T-cell (primary cell): ENCODE measurements at regions of chr14 and their contacts with region 1.

Region 1: GRCh38 chr14:29054119-29054518 is 287.5 kb downstream of the FOXG1 start:
- DNase-seq: no peak
- ATAC-seq: no peak
- H3K4me3 ChIP-seq: no peak overlapping the region
- H3K4me3 Mint-ChIP-seq: no peak overlapping the region
- H3K27ac ChIP-seq: no peak overlapping the region
- H3K27ac Mint-ChIP-seq: no peak overlapping the region
- H3K4me1 ChIP-seq: no peaks in the 10 kb centered on the region
- H3K4me1 Mint-ChIP-seq: no peaks in the 10 kb centered on the region
- H3K27me3 ChIP-seq: no peaks in the 10 kb centered on the region
- H3K27me3 Mint-ChIP-seq: no peaks in the 10 kb centered on the region

Region 2: DNA sequence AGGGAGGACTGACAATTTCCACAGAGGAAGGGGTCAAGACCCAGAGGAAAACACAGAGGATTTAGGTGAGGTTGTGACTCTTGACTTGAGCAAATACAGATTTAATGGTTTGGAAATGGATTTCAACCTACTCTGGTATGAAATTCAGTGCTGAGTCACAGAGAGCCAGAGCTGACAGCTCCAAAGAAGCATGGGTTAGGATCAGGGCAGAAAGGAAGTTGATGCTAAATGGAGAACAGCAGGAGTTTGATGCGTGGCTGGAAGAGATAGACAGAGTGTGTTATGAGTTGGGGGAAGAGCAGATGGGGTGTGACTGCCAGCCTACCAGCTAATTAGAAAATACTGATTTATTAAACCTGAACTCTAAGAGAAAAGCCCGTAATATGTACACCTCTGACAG is 14.9 kb before region 1 on chr14:
- CTCF ChIA-PET with region 1: no interaction called
- POLR2A ChIA-PET with region 1: interaction called in 1 of 2 experiments, 10 read pairs
- DNase-seq: no peak
- ATAC-seq: no peak
- H3K4me3 ChIP-seq: no peak overlapping the region
- H3K4me3 Mint-ChIP-seq: no peak overlapping the region
- H3K27ac ChIP-seq: no peak overlapping the region
- H3K27ac Mint-ChIP-seq: no peak overlapping the region
- H3K4me1 ChIP-seq: no peaks in the 10 kb centered on the region
- H3K4me1 Mint-ChIP-seq: no peaks in the 10 kb centered on the region
- H3K27me3 ChIP-seq: no peaks in the 10 kb centered on the region
- H3K27me3 Mint-ChIP-seq: no peaks in the 10 kb centered on the region